Heart left ventricle (tissue), 16 donors: ENCODE measurements at regions of chr4 and their contacts with region 1.

Region 1: DNA sequence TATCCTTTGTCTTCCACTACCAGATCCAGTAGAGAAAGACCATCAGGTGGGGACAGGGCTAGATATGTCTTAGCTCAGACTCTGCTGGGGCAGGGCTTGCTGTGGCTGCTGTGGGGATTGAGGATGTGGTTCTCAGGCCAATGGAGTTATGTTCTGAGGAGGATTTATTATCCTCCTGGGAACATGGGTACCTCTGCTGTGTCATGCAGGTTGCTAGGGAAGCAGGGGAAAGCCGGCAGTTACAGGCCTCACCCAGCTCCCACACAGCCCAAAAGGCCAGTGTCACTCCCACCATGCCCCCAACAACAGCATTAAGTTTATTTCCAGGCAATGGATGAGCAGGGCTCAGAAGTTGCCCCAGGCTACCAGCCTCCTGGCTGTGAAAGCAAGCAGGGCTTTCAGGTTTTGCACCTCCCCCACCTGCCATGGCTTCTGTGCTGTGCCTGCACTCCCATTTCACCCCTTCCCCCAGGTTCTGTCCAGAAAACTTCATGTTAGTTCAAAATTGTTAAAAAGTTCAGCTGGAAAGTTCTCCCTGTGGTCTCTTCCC is 879.9 kb downstream of the ARAP2 start:
- DNase-seq: no peak
- ATAC-seq: no peak
- H3K4me3 ChIP-seq: no peak overlapping the region
- H3K27ac ChIP-seq: no peak overlapping the region
- H3K4me1 ChIP-seq: no peaks in the 10 kb centered on the region
- H3K27me3 ChIP-seq: no peaks in the 10 kb centered on the region
- CTCF ChIP-seq: no peak
- POLR2A ChIP-seq: no peak

Region 2: GRCh38 chr4:35342833-35343232 is 21.6 kb before region 1 on chr4:
- intact Hi-C with region 1: no loop called
- DNase-seq: no peak
- ATAC-seq: no peak
- H3K4me3 ChIP-seq: no peak overlapping the region
- H3K27ac ChIP-seq: no peak overlapping the region
- H3K4me1 ChIP-seq: no peaks in the 10 kb centered on the region
- H3K27me3 ChIP-seq: no peaks in the 10 kb centered on the region
- CTCF ChIP-seq: no peak
- POLR2A ChIP-seq: no peak

Region 3: DNA sequence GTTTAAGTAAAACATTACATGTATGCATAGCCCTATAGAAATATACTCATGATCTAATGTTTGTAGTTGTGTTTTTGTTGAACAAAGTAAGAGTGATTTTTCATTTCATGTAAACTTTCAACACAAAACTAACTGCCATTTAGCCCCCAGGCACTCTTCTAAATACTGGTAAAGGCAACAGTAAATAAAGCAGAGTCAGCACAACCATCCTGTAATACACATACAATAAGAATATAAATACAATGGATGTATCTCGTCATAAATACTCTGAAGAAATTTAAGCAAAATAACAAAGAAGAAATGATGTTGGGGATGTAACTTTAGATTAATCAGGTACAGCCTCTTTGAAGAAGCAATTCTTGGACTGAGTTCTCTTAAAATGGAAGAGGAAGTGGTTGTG is 58.7 kb after region 1 on chr4:
- intact Hi-C with region 1: loop called in 1 of 10 experiments (anchors 10 kb)
- DNase-seq: no peak
- ATAC-seq: no peak
- H3K4me3 ChIP-seq: no peak overlapping the region
- H3K27ac ChIP-seq: no peak overlapping the region
- H3K4me1 ChIP-seq: no peaks in the 10 kb centered on the region
- H3K27me3 ChIP-seq: no peaks in the 10 kb centered on the region
- CTCF ChIP-seq: no peak
- POLR2A ChIP-seq: no peak